H1 (cell line): ENCODE measurements at regions of chr6 and their contacts with region 1.

Region 1: DNA sequence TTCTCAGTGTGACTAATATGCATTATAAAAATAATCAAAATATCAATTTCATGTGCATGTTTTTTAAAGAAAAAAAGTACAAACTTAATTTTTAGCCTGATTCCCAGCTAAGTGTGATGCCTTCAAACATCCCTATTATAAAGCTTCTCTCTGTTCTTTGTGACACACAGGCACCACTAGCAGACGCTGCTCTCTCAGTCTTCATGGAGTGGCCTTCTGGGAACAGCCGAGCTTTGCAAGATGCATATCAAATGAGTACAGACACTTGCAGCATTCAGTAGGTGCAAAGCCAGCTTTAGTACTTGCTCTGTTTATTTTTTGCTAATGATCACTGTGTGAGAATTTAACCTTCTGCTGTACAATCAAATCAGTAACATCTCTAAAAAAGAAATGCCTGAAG is 340.0 kb downstream of the ADGRB3 start:
- DNase-seq: no peak
- H3K4me3 ChIP-seq: no peak overlapping the region
- H3K27ac ChIP-seq: no peak overlapping the region
- H3K4me1 ChIP-seq: no peaks in the 10 kb centered on the region
- H3K27me3 ChIP-seq: no peaks in the 10 kb centered on the region
- CTCF ChIP-seq: peak in 2 of 3 experiments; percentile 40 to 56; a peak in 3 of 4 replicates
- EP300 ChIP-seq: no peak
- POLR2A ChIP-seq: no peak
- RAD21 ChIP-seq: peak; percentile 69 to 71

Region 2: GRCh38 chr6:68990317-68990716 is 15.3 kb after region 1 on chr6:
- CTCF ChIA-PET with region 1: interaction called, 16 read pairs
- POLR2A ChIA-PET with region 1: no interaction called
- DNase-seq: no peak
- H3K4me3 ChIP-seq: no peak overlapping the region
- H3K27ac ChIP-seq: no peak overlapping the region
- H3K4me1 ChIP-seq: peaks cover 0 to 4% (median 0%) of the 10 kb centered on the region in 4 experiments; a peak in 1 of 7 replicates
- H3K27me3 ChIP-seq: no peaks in the 10 kb centered on the region
- CTCF ChIP-seq: no peak
- EP300 ChIP-seq: no peak
- POLR2A ChIP-seq: no peak
- RAD21 ChIP-seq: no peak

Region 3: GRCh38 chr6:69105288-69105687 is 130.2 kb after region 1 on chr6:
- CTCF ChIA-PET with region 1: interaction called, 11 read pairs
- POLR2A ChIA-PET with region 1: no interaction called
- DNase-seq: no peak
- H3K4me3 ChIP-seq: no peak overlapping the region
- H3K27ac ChIP-seq: no peak overlapping the region
- H3K4me1 ChIP-seq: 0 out of 7 replicates have a peak, but pooled peaks cover 0 to 2% (median 0%) of the 10 kb centered on the region in 4 experiments
- H3K27me3 ChIP-seq: no peaks in the 10 kb centered on the region
- CTCF ChIP-seq: peak in 2 of 3 experiments; percentile 19 to 44; a peak in 2 of 4 replicates
- EP300 ChIP-seq: no peak
- POLR2A ChIP-seq: no peak
- RAD21 ChIP-seq: peak; percentile 59 to 69